ENCODE measurements at regions of chr16 and their contacts with region 1.

Region 1: DNA sequence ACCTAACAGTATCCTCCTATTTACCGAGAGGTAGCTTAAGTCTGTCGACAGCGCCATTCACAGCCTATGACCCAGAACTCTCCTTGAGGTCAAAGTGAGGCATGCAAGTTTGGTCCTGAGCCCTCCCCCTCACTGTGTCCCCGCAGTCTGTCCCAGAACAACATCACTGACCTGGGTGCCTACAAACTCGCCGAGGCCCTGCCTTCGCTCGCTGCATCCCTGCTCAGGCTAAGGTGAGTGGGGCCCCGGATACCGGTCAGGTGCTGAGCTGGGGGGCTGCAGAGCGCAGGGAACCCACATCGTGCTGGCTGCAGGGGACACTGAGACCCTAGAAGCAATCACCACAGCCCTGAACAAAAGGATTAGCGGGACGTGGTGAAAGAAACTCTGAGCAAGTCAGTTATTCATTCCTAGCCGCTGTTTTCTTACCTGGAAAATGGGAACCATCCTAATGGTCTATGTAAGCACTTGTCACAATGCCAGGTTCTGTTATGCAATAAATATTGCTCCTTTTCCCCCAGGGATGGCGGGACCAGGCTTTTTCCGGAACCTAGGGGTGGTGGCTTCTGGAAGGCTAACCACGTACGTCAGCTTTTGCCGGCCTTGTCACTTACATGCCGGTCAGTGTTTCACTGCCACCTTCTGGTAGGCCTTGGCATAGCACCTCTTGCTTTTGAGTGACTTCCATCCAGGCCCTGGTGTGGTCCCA is 23.8 kb downstream of the DEXI start:
- DNase-seq: peak; percentile 91
- ATAC-seq: peak; percentile 80
- H3K4me3 ChIP-seq: no peak overlapping the region
- H3K4me3 Mint-ChIP-seq: peak overlapping the region; percentile 44
- H3K27ac ChIP-seq: peak overlapping the region; percentile 51 to 95
- H3K27ac Mint-ChIP-seq: peak overlapping the region; percentile 82
- H3K4me1 ChIP-seq: peaks cover 56 to 63% of the 10 kb centered on the region in 2 donors
- H3K4me1 Mint-ChIP-seq: peaks cover 66% of the 10 kb centered on the region
- H3K27me3 ChIP-seq: no peaks in the 10 kb centered on the region
- H3K27me3 Mint-ChIP-seq: no peaks in the 10 kb centered on the region
- CTCF ChIP-seq: peak; percentile 94

Region 2: DNA sequence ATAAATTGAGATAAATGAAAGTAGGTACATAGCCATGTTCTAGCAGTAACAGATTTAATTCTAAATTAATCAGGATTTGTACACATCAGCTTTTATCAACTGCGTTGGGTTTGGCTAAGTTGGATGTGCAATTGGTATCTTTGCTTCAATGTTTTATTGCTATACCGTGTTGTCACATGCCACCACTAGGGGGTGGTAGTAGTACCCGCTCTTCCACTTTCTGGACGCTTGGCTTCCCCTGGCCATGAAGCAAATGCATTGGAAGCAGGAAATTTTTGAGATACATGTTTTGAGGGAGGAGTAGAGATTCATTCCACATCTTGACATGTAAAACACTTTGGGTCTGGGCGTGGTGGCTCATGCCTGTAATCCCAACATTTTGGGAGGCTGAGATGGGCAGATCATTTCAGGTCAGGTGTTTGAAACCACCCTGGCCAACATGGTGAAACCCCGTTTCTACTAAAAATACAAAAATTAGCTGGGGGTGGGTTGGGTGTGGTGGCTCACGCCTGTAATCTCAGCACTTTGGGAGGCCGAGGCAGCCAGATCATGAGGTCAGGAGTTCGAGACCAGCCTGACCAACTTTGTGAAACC is 396.7 kb before region 1 on chr16:
- CTCF ChIA-PET with region 1: interaction called, 99 read pairs
- POLR2A ChIA-PET with region 1: interaction called, 5 read pairs
- intact Hi-C with region 1: no loop called
- DNase-seq: peak; percentile 72
- ATAC-seq: peak; percentile 80
- H3K4me3 ChIP-seq: no peak overlapping the region
- H3K4me3 Mint-ChIP-seq: no peak overlapping the region
- H3K27ac ChIP-seq: no peak overlapping the region
- H3K27ac Mint-ChIP-seq: no peak overlapping the region
- H3K4me1 ChIP-seq: peaks cover 0 to 3% of the 10 kb centered on the region in 2 donors
- H3K4me1 Mint-ChIP-seq: peaks cover 2% of the 10 kb centered on the region
- H3K27me3 ChIP-seq: no peaks in the 10 kb centered on the region
- H3K27me3 Mint-ChIP-seq: no peaks in the 10 kb centered on the region
- CTCF ChIP-seq: peak; percentile 93

Region 3: DNA sequence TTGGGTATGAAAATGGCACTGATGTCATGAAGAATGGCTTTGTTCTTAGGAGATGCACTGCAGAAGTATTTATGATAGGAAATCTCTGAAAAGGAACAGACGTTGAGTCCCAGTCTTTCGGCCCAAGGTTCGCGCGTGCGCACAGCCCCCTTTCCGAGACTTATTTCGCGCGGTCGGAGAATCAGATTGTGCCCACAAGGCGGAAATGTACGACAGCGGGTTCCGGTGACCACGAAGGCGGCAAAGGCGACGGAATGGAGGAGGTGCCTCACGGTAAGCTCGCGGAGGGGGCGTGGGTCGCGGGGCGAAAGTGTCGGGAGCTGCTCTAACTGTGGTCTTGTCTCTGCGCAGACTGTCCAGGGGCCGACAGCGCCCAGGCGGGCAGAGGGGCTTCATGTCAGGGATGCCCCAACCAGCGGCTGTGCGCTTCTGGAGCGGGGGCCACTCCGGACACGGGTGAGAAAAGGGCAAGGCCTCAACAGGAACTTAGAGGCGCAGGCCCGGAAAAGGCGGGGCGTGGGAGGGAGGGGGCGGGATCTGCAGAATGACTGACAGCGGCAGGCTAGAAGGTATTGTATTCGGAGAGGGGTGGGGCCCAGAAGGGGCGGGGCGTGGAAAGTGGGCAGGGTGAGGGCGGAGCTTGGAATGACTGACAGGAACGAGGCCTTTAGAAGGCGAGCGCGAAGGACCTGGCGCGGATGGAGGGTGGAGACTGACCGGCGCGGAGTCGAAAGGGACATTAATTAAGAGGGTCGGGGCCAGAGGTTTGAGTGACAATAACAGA is 174.6 kb before region 1 on chr16 and contains the start of gene NUBP1:
- CTCF ChIA-PET with region 1: interaction called, 33 read pairs
- POLR2A ChIA-PET with region 1: interaction called, 7 read pairs
- intact Hi-C with region 1: loop called (anchors 2 kb)
- DNase-seq: peak; percentile 100
- ATAC-seq: peak; percentile 93
- H3K4me3 ChIP-seq: peak within 1 kb of the TSS; percentile 61 to 85 (median 73)
- H3K4me3 Mint-ChIP-seq: peak within 1 kb of the TSS; percentile 93
- H3K27ac ChIP-seq: peak within 1 kb of the TSS; percentile 93 to 97
- H3K27ac Mint-ChIP-seq: peak within 1 kb of the TSS; percentile 97
- H3K4me1 ChIP-seq: peaks cover 31 to 37% of the 10 kb centered on the region in 2 donors
- H3K4me1 Mint-ChIP-seq: peaks cover 55% of the 10 kb centered on the region
- H3K27me3 ChIP-seq: no peaks in the 10 kb centered on the region
- H3K27me3 Mint-ChIP-seq: no peaks in the 10 kb centered on the region
- CTCF ChIP-seq: no peak
- total RNA-seq, gene NUBP1: 54.3 and 67.3 TPM in 2 replicates

Region 4: GRCh38 chr16:10865991-10866966 is 52.2 kb before region 1 on chr16:
- CTCF ChIA-PET with region 1: interaction called, 36 read pairs
- POLR2A ChIA-PET with region 1: interaction called, 6 read pairs
- intact Hi-C with region 1: loop called (anchors 1 kb)
- DNase-seq: peak; percentile 19
- ATAC-seq: no peak
- H3K4me3 ChIP-seq: no peak overlapping the region
- H3K4me3 Mint-ChIP-seq: peak overlapping the region; percentile 78
- H3K27ac ChIP-seq: peak overlapping the region; percentile 21 to 92
- H3K27ac Mint-ChIP-seq: peak overlapping the region; percentile 93
- H3K4me1 ChIP-seq: peaks cover 73 to 76% of the 10 kb centered on the region in 2 donors
- H3K4me1 Mint-ChIP-seq: peaks cover 87% of the 10 kb centered on the region
- H3K27me3 ChIP-seq: no peaks in the 10 kb centered on the region
- H3K27me3 Mint-ChIP-seq: no peaks in the 10 kb centered on the region
- CTCF ChIP-seq: no peak

Region 5: DNA sequence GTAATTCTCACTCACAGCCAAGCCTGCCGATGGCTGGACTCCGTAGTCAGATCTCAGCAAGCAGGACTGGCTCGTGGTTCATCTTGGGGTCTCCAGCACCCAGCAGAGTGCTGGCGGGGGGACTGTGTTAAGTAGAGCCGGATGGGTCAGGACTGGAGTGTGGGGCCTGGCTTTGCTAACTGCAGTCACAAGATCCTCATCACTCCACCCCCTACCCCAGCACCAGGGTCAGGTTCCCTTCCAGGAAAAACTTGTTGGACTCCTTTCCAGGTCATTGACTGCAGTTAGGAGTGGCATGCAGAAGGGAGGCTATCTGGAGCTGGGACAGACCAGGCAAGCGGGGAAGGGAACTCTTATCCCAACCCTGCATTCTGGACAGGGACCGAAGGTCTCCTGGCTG is 35.4 kb before region 1 on chr16:
- CTCF ChIA-PET with region 1: interaction called, 141 read pairs
- POLR2A ChIA-PET with region 1: interaction called, 59 read pairs
- intact Hi-C with region 1: no loop called
- DNase-seq: no peak
- ATAC-seq: no peak
- H3K4me3 ChIP-seq: peak overlapping the region in 2 of 5 experiments; percentile 4 to 8
- H3K4me3 Mint-ChIP-seq: peak overlapping the region; percentile 77
- H3K27ac ChIP-seq: peak overlapping the region; percentile 31 to 74
- H3K27ac Mint-ChIP-seq: peak overlapping the region; percentile 87
- H3K4me1 ChIP-seq: peaks cover 75 to 87% of the 10 kb centered on the region in 2 donors
- H3K4me1 Mint-ChIP-seq: peaks cover 74% of the 10 kb centered on the region
- H3K27me3 ChIP-seq: no peaks in the 10 kb centered on the region
- H3K27me3 Mint-ChIP-seq: no peaks in the 10 kb centered on the region
- CTCF ChIP-seq: no peak

Region 6: DNA sequence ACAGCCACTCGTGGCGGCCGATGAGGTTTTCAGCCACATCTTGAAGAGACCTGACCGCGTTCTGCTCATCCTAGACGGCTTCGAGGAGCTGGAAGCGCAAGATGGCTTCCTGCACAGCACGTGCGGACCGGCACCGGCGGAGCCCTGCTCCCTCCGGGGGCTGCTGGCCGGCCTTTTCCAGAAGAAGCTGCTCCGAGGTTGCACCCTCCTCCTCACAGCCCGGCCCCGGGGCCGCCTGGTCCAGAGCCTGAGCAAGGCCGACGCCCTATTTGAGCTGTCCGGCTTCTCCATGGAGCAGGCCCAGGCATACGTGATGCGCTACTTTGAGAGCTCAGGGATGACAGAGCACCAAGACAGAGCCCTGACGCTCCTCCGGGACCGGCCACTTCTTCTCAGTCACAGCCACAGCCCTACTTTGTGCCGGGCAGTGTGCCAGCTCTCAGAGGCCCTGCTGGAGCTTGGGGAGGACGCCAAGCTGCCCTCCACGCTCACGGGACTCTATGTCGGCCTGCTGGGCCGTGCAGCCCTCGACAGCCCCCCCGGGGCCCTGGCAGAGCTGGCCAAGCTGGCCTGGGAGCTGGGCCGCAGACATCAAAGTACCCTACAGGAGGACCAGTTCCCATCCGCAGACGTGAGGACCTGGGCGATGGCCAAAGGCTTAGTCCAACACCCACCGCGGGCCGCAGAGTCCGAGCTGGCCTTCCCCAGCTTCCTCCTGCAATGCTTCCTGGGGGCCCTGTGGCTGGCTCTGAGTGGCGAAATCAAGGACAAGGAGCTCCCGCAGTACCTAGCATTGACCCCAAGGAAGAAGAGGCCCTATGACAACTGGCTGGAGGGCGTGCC is 11.3 kb before region 1 on chr16:
- CTCF ChIA-PET with region 1: interaction called, 15 read pairs
- POLR2A ChIA-PET with region 1: no interaction called
- intact Hi-C with region 1: no loop called
- DNase-seq: no peak
- ATAC-seq: no peak
- H3K4me3 ChIP-seq: no peak overlapping the region
- H3K4me3 Mint-ChIP-seq: no peak overlapping the region
- H3K27ac ChIP-seq: peak overlapping the region in 1 of 2 donors; percentile 95
- H3K27ac Mint-ChIP-seq: peak overlapping the region; percentile 67
- H3K4me1 ChIP-seq: peaks cover 43 to 55% of the 10 kb centered on the region in 2 donors
- H3K4me1 Mint-ChIP-seq: peaks cover 70% of the 10 kb centered on the region
- H3K27me3 ChIP-seq: no peaks in the 10 kb centered on the region
- H3K27me3 Mint-ChIP-seq: no peaks in the 10 kb centered on the region
- CTCF ChIP-seq: no peak